Caco-2 (cell line): ENCODE measurements at regions of chr2 and their contacts with region 1.

Region 1: DNA sequence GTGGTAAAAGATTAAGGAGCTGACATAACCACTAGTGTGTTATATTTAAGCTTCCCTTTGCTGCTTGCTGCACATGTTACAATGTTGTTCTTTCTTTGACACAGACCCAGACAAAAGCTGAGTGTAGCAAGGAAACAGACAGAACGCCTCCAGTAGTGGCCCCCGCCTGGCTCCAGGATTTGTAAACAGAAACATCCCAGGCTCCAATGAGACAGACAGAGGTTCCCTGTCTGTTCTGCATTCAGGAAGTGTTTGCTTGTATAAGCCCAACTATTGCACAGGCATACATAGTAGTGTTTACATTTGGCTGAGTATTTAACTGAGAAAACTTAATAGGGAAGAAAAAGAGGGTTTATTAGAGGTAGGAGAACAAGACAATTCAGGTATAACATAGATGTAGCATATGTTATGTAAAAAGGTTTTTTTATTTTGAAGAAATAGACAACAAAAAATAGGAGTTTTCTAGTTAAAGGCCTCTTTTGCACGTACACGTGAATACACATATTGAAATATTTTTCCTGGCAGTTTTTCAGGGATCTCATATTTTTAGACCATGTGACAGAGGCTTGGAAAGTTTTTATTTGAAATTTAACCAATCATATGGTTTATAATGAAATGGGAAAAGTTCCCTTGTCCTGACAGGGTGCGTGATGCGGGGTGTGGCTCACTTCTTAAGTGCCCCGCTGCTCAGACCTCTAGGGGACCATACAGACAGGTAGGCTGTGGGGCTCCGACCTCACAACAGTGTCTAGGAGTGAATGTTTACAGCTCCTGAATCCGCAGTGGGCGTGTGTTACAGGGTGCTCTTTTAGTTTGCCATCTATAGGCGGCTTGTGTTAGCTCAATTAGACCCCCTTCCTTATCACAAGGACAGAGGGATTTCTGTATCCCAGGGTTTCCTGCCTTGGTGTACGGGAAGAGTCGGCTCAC is 118.4 kb downstream of the BMPR2 start:
- DNase-seq: peak in 1 of 2 experiments; percentile 21
- H3K4me3 ChIP-seq: no peak overlapping the region
- H3K4me3 Mint-ChIP-seq: no peak overlapping the region
- H3K27ac Mint-ChIP-seq: no peak overlapping the region
- H3K4me1 ChIP-seq: no peaks in the 10 kb centered on the region; the same call in 1 of the 2 replicates
- H3K4me1 Mint-ChIP-seq: no peaks in the 10 kb centered on the region
- H3K27me3 ChIP-seq: no peaks in the 10 kb centered on the region
- H3K27me3 Mint-ChIP-seq: no peaks in the 10 kb centered on the region
- CTCF ChIP-seq: no peak

Region 2: DNA sequence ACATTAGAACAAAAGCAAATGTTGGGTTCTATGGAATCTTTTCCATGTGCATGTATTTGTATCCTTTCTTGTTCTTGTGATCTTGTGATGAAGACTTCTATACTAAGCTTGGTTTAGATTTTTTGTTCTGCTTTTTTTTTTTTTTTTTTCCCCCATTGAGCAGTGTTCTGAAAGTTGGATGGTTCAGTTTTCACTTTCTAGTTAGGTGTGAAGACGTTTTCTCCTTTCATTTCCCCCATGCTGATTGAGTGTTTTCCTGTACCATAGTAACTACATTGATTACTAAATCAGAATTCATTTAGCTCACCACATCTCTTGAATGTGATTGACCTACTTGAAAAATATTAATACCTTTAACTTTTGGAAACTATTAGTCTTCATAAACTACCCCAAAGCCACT is 194.9 kb before region 1 on chr2:
- CTCF ChIA-PET with region 1: no interaction called
- POLR2A ChIA-PET with region 1: no interaction called
- intact Hi-C with region 1: loop called (anchors 10 kb)
- DNase-seq: no peak
- H3K4me3 ChIP-seq: no peak overlapping the region
- H3K4me3 Mint-ChIP-seq: no peak overlapping the region
- H3K27ac Mint-ChIP-seq: no peak overlapping the region
- H3K4me1 ChIP-seq: no peaks in the 10 kb centered on the region
- H3K4me1 Mint-ChIP-seq: no peaks in the 10 kb centered on the region
- H3K27me3 ChIP-seq: no peaks in the 10 kb centered on the region
- H3K27me3 Mint-ChIP-seq: no peaks in the 10 kb centered on the region
- CTCF ChIP-seq: no peak

Region 3: GRCh38 chr2:202529389-202529788 is 34.8 kb after region 1 on chr2:
- CTCF ChIA-PET with region 1: no interaction called
- POLR2A ChIA-PET with region 1: no interaction called
- intact Hi-C with region 1: no loop called
- DNase-seq: no peak
- H3K4me3 ChIP-seq: no peak overlapping the region
- H3K4me3 Mint-ChIP-seq: no peak overlapping the region
- H3K27ac Mint-ChIP-seq: no peak overlapping the region
- H3K4me1 ChIP-seq: no peaks in the 10 kb centered on the region
- H3K4me1 Mint-ChIP-seq: no peaks in the 10 kb centered on the region
- H3K27me3 ChIP-seq: no peaks in the 10 kb centered on the region
- H3K27me3 Mint-ChIP-seq: no peaks in the 10 kb centered on the region
- CTCF ChIP-seq: no peak